ENCODE measurements at regions of chr9 and their contacts with region 1.

Region 1: GRCh38 chr9:132546148-132547051 is 36.0 kb upstream of the BARHL1 start:
- DNase-seq: peak; percentile 96
- H3K4me3 ChIP-seq: peak overlapping the region; percentile 24 to 29; a peak in 3 of 4 replicates
- H3K27ac ChIP-seq: peak overlapping the region in 1 of 2 experiments; percentile 85; a peak in 2 of 4 replicates
- H3K4me1 ChIP-seq: peaks cover 0 to 49% of the 10 kb centered on the region in 2 experiments; a peak in 1 of 4 replicates
- H3K27me3 ChIP-seq: no peaks in the 10 kb centered on the region
- CTCF ChIP-seq: peak; percentile 51
- EP300 ChIP-seq: peak in 1 of 2 experiments; percentile 91; a peak in 2 of 4 replicates
- RAD21 ChIP-seq: no peak; the same call in 1 of the 2 replicates

Region 2: DNA sequence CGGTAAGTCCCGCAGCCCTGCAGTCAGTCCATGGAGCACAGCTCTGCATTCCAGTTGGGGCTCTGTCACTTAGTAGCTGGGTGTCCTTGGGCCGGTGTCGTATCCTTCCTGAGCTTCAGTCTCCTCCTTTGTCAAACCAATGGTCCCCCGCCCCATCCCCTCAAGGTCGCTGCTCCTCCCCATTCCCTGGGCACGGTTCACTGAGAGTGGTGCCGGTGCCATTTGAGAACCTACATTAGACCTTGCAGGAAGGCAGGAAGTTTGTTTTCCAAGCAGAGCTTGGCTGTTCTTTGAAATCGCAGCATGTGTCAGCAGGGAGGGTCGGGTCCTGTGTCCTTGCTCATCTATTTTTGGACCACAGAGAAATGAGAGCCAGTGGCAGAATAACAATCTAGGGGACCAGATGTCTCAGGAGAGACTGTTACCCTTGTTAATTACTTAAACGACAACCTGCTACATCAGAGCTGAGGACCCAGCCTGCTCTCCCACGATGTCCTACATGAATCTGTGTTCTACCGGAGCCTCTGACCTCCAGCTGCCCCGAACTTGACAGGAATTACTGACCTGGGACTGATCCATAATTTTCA is 14.3 kb after region 1 on chr9:
- CTCF ChIA-PET with region 1: interaction called, 19 read pairs
- POLR2A ChIA-PET with region 1: interaction called, 3 read pairs
- DNase-seq: peak; percentile 47
- H3K4me3 ChIP-seq: no peak overlapping the region
- H3K27ac ChIP-seq: peak overlapping the region in 1 of 2 experiments; percentile 34; a peak in 2 of 4 replicates
- H3K4me1 ChIP-seq: peaks cover 0 to 16% of the 10 kb centered on the region in 2 experiments; a peak in 1 of 4 replicates
- H3K27me3 ChIP-seq: no peaks in the 10 kb centered on the region; the same call in 1 of the 2 replicates
- CTCF ChIP-seq: no peak
- EP300 ChIP-seq: no peak
- RAD21 ChIP-seq: no peak